Posterior cingulate gyrus (tissue), 11 donors: ENCODE measurements at regions of chr18 and their contacts with region 1.

Region 1: GRCh38 chr18:712401-713134 is at the start of gene ENOSF1:
- DNase-seq: peak in 9 of 10 donors; percentile 22 to 88 (median 57)

Region 2: DNA sequence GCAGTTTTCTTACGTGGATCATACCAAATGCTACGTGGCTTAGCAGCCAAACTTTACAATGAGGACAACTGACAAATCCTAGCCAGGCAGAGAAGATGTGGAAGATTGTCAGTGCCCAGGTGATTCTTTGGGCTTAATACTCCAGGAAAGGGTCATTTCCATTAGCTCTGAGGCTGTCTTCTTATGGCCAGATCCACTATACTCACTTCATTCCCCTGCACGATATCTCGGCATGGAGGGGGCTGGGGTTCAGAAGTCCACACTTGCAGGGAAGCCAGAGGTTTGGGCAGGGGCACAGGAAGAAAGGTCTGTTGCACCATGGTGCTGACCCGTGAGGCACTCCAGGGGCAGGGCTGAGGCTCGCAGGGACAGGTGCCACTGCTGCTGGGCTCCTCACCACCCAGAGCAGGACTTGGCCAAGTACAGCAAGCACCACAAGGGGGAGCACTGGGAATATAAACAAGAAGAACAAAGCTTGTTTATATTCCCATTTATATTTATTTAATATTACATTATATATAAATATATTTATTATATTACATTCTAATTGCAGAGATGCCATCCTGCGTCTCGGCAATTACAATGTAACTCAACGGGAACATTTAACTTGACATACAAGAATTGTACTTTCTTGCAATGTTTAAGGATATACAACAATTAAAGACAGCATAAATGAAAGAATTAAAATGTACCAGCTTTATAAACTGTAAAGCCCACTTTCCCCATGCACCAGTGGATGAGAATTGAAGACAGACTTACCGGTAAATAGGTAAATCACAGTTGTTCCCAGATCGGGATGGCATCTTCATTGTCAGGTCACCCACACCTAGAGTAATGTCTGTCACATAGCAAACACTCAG is 88.6 kb before region 1 on chr18:
- intact Hi-C with region 1: loop called (anchors 5 kb)
- DNase-seq: peak; percentile 34 to 92 (median 74)

Region 3: GRCh38 chr18:658001-658946 is 54.3 kb before region 1 on chr18:
- intact Hi-C with region 1: loop called (anchors 10 kb)
- DNase-seq: peak; percentile 67 to 97 (median 82)